GM13976 (cell line): ENCODE measurements at regions of chr3 and their contacts with region 1.

Region 1: DNA sequence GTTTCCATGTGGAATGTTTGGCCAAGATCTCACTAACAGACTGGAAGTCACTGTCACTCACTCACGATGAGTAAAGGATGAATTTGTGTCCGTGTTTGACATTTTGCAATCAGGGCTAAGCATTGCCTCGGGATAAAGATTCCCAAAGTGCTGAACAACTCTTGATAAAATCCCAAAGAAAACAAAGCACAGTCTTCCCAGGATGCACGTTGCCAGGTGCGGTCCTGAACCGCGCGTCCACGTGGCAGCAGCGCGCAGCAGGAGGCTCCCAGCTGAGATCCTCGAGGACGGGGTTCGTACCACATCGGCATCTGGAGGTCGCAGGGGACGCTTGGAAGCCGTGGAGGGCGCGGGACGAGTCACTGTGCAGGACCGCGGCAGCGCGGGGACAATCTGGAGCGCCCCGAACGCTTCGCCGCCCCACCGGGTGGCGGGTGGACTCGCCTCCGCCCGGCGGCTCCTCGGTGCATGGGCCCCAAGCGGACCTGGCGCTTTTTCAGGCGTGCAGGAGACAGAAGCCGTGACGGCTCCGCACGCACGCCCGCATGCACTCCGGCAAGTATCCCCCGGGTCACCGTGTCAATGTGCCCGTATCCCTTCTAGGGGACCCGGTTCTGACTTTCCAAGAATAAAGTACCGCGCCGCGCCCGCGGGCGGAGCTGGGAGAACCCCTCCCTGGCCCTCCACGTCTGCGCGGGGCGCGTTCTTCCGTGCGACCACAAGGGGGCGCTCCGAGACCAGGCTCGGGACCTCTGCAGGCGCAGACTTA is 17.7 kb downstream of the CPN2 start:
- DNase-seq: peak; percentile 90
- CTCF ChIP-seq: peak; percentile 96

Region 2: GRCh38 chr3:194583604-194584318 is 250.4 kb after region 1 on chr3:
- in situ Hi-C with region 1: loop called (anchors 25 kb)
- DNase-seq: peak; percentile 99
- CTCF ChIP-seq: no peak